Activated CD4-positive, alpha-beta memory T cell treated with anti-CD3 and anti-CD28 coated beads for 36 hours (primary cell): ENCODE measurements at regions of chr9 and their contacts with region 1.

Region 1: GRCh38 chr9:34899535-34900158 is 58.4 kb upstream of the PHF24 start:
- DNase-seq: peak; percentile 89
- H3K4me3 Mint-ChIP-seq: no peak overlapping the region
- H3K27ac Mint-ChIP-seq: no peak overlapping the region
- H3K4me1 Mint-ChIP-seq: no peaks in the 10 kb centered on the region
- H3K27me3 Mint-ChIP-seq: peaks cover 31% of the 10 kb centered on the region

Region 2: DNA sequence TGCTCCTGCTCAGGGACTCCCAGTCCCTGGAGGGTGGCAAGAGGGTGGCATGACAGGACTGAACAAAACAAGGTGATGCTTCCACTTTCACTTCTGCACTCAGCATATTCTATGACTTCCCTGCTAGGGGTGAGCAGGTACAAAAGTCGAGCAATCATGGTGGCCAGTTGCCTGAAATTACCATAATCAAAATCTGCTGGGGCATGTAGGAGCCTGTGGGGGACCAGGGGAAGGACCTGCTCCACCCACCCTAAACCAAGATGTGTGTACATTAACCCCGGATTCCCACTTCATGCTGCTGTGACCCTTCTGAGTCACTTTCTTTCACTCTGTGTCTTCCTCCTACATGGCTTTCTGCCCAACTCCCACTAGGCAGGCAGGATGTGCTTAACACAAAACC is 14.9 kb before region 1 on chr9:
- CTCF ChIA-PET with region 1: interaction called, 22 read pairs
- POLR2A ChIA-PET with region 1: no interaction called
- intact Hi-C with region 1: no loop called
- DNase-seq: peak; percentile 66
- H3K4me3 Mint-ChIP-seq: no peak overlapping the region
- H3K27ac Mint-ChIP-seq: no peak overlapping the region
- H3K4me1 Mint-ChIP-seq: no peaks in the 10 kb centered on the region
- H3K27me3 Mint-ChIP-seq: no peaks in the 10 kb centered on the region

Region 3: GRCh38 chr9:34957492-34958410 is 58.1 kb after region 1 on chr9 and contains the start of gene PHF24:
- CTCF ChIA-PET with region 1: interaction called, 12 read pairs
- POLR2A ChIA-PET with region 1: no interaction called
- intact Hi-C with region 1: loop called (anchors 5 kb)
- DNase-seq: peak; percentile 26
- H3K4me3 Mint-ChIP-seq: peak within 1 kb of the TSS; percentile 27
- H3K27ac Mint-ChIP-seq: no peak within 1 kb of the TSS
- H3K4me1 Mint-ChIP-seq: peaks cover 26% of the 10 kb centered on the region
- H3K27me3 Mint-ChIP-seq: peaks cover 47% of the 10 kb centered on the region
- total RNA-seq, gene PHF24: 0.12 TPM in 1 of 2 experiments, not detected in the other

Region 4: GRCh38 chr9:34994260-34994899 is 94.7 kb after region 1 on chr9:
- CTCF ChIA-PET with region 1: interaction called, 30 read pairs
- POLR2A ChIA-PET with region 1: no interaction called
- intact Hi-C with region 1: no loop called
- DNase-seq: no peak
- H3K4me3 Mint-ChIP-seq: no peak overlapping the region
- H3K27ac Mint-ChIP-seq: no peak overlapping the region
- H3K4me1 Mint-ChIP-seq: peaks cover 48% of the 10 kb centered on the region
- H3K27me3 Mint-ChIP-seq: no peaks in the 10 kb centered on the region

Region 5: DNA sequence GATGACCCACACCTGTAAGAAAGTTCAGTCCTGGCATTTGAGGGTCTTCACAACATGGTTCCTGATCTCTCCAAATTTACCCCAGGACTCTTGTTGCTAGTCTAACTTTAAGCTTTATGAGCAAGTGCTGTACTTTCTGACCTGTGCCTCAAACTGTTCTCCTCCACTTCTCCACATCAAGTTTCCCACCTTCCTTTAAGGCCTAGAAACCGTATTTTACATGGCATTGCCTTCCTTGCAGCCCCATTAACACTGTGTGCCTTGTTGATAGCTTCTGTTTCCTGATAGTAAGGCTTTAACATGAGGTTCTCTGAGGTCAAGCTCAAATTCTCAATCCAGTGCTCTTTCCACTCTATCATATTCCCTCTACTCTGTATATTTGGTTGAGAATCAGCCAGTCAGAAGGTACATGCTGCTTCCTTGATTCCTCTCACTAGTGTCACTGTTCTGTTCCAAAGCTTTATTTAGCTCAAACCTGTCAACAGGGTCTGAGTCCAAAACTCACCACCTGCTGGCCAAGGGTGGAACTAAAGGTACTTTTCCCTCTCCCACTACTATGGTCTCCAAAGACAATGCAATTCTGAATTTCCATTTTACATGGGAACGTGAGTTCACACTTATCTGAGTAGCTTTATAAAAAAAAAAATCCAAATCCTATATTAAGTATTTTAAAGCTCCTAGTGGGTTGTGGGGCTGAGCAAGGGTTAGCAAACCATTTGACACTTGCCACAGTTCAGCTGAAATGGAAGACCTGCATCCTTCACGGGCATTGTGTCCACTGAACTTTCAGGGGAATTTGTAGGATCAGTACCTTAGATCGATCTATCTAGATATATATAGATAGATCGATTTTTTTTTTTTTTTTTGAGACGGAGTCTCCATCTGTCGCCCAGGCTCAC is 151.7 kb after region 1 on chr9:
- CTCF ChIA-PET with region 1: interaction called, 71 read pairs
- POLR2A ChIA-PET with region 1: interaction called, 9 read pairs
- intact Hi-C with region 1: loop called (anchors 1 kb)
- DNase-seq: peak; percentile 63
- H3K4me3 Mint-ChIP-seq: no peak overlapping the region
- H3K27ac Mint-ChIP-seq: no peak overlapping the region
- H3K4me1 Mint-ChIP-seq: no peaks in the 10 kb centered on the region
- H3K27me3 Mint-ChIP-seq: no peaks in the 10 kb centered on the region

Region 6: GRCh38 chr9:35102926-35103659 is 203.4 kb after region 1 on chr9 and contains the start of gene STOML2:
- CTCF ChIA-PET with region 1: interaction called, 31 read pairs
- POLR2A ChIA-PET with region 1: no interaction called
- intact Hi-C with region 1: no loop called
- DNase-seq: peak; percentile 97
- H3K4me3 Mint-ChIP-seq: peak within 1 kb of the TSS; percentile 99
- H3K27ac Mint-ChIP-seq: peak within 1 kb of the TSS; percentile 93
- H3K4me1 Mint-ChIP-seq: peaks cover 30% of the 10 kb centered on the region
- H3K27me3 Mint-ChIP-seq: no peaks in the 10 kb centered on the region
- total RNA-seq, gene STOML2: 162 TPM

Region 7: DNA sequence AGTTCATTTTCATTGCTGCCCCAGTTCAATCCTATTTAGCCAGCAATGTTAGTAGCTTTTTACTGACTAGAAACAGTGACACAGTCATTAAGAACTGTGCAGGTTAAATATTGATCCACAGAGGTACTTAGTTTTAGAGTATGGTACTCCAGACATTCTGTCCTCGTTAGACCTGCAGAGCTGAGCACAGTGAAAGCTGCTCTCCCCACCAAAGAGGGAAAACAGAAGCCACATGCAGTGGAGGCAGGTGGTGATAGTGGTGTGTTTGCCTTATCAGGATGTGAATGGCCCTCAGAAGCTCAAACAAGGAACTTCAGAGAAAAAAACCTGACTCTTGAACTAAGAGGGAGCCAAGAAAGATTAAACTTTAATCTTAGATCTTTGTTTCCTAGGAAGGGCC is 337.7 kb after region 1 on chr9:
- CTCF ChIA-PET with region 1: no interaction called
- POLR2A ChIA-PET with region 1: no interaction called
- intact Hi-C with region 1: no loop called
- DNase-seq: no peak
- H3K4me3 Mint-ChIP-seq: no peak overlapping the region
- H3K27ac Mint-ChIP-seq: no peak overlapping the region
- H3K4me1 Mint-ChIP-seq: no peaks in the 10 kb centered on the region
- H3K27me3 Mint-ChIP-seq: peaks cover 7% of the 10 kb centered on the region

Region 8: DNA sequence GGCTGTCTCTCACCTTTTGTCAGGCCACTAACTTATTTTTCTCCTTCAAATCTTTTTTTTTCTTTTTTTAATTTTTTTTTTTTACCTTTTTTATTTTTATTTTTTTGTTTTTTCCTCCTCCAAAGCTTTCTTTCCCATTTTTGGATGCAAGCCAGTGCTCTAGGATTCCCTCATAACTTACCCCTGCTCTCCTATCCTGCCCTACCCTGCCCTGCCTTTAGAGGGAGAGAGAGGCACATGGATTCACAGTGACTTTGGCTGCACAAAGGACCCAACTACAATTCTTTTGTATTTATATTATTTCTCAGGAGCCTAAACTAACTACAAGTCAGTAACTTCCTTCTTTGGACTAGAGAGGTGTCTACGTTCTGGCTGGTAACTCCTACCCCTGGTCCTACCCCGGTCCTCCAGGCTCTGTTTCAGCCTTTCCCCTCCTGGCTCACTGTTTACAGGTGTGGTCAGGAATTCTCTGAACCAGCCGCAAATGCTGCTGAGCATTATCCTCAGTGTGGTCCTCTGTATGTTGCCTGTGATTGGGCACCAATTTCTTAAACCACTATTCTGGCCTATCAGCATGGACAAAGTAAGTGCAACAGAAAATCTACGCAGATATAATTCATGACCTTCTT is 581.8 kb after region 1 on chr9:
- CTCF ChIA-PET with region 1: interaction called, 24 read pairs
- POLR2A ChIA-PET with region 1: no interaction called
- intact Hi-C with region 1: loop called (anchors 1 kb)
- DNase-seq: peak; percentile 44
- H3K4me3 Mint-ChIP-seq: no peak overlapping the region
- H3K27ac Mint-ChIP-seq: no peak overlapping the region
- H3K4me1 Mint-ChIP-seq: no peaks in the 10 kb centered on the region
- H3K27me3 Mint-ChIP-seq: no peaks in the 10 kb centered on the region